ENCODE measurements at regions of chr4 and their contacts with region 1.

Region 1: GRCh38 chr4:176238157-176238610 is 30.8 kb downstream of the ASB5 start:
- DNase-seq: peak in 1 of 2 donors; percentile 14
- ATAC-seq: peak; percentile 74 to 95 (median 85)
- H3K4me3 ChIP-seq: peak overlapping the region in 5 of 10 donors; percentile 3 to 31 (median 24)
- H3K27ac ChIP-seq: peak overlapping the region; percentile 63 to 92 (median 84)
- H3K4me1 ChIP-seq: peaks cover 0 to 26% (median 12%) of the 10 kb centered on the region in 9 donors
- H3K27me3 ChIP-seq: no peaks in the 10 kb centered on the region
- CTCF ChIP-seq: no peak

Region 2: GRCh38 chr4:176270669-176271068 is 32.5 kb after region 1 on chr4:
- intact Hi-C with region 1: loop called in 2 of 10 experiments (anchors 2 to 5 kb)
- DNase-seq: no peak
- ATAC-seq: peak in 1 of 8 donors; percentile 42
- H3K4me3 ChIP-seq: no peak overlapping the region
- H3K27ac ChIP-seq: no peak overlapping the region
- H3K4me1 ChIP-seq: peaks cover 0 to 6% (median 0%) of the 10 kb centered on the region in 9 donors
- H3K27me3 ChIP-seq: no peaks in the 10 kb centered on the region
- CTCF ChIP-seq: no peak